Panc1 (cell line): ENCODE measurements at regions of chr12 and their contacts with region 1.

Region 1: GRCh38 chr12:106841510-106842302 is 67.2 kb downstream of the RIC8B start:
- DNase-seq: no peak
- ATAC-seq: peak; percentile 74
- H3K4me3 ChIP-seq: no peak overlapping the region
- H3K27ac ChIP-seq: no peak overlapping the region
- H3K4me1 ChIP-seq: no peaks in the 10 kb centered on the region
- H3K27me3 ChIP-seq: no peaks in the 10 kb centered on the region
- CTCF ChIP-seq: peak; percentile 65; the same call in 1 of the 2 replicates

Region 2: DNA sequence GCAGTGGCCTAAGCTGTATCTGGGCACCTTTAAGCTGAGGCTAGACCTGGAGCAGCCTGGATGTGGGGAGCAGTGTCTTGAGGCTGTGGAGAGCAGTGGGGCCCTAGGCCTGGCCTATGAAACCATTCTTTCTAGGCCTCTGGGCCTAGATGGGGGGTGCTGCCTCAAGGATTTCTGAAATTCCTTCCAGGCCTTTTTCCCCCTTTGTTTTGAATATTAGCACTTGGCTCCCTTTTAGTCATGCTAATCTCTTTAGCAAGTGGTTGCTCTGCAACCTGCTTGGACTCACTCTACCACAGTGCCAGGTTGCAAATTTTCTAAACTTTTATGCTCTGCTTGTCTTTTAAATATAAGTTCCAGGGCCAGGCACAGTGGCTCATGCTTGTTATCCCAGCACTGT is 300.5 kb before region 1 on chr12:
- CTCF ChIA-PET with region 1: interaction called, 12 read pairs
- POLR2A ChIA-PET with region 1: no interaction called
- in situ Hi-C with region 1: no loop called
- intact Hi-C with region 1: no loop called
- DNase-seq: no peak
- ATAC-seq: no peak
- H3K4me3 ChIP-seq: no peak overlapping the region
- H3K27ac ChIP-seq: no peak overlapping the region
- H3K4me1 ChIP-seq: no peaks in the 10 kb centered on the region
- H3K27me3 ChIP-seq: peaks cover 3% of the 10 kb centered on the region; the same call in 1 of the 2 replicates
- CTCF ChIP-seq: no peak

Region 3: GRCh38 chr12:106774005-106774807 is 67.5 kb before region 1 on chr12 and contains the start of gene RIC8B:
- CTCF ChIA-PET with region 1: no interaction called
- POLR2A ChIA-PET with region 1: no interaction called
- in situ Hi-C with region 1: no loop called
- intact Hi-C with region 1: no loop called
- DNase-seq: peak; percentile 95
- ATAC-seq: peak; percentile 97
- H3K4me3 ChIP-seq: peak within 1 kb of the TSS; percentile 84 to 98
- H3K27ac ChIP-seq: peak within 1 kb of the TSS; percentile 99
- H3K4me1 ChIP-seq: peaks cover 16% of the 10 kb centered on the region
- H3K27me3 ChIP-seq: no peaks in the 10 kb centered on the region
- CTCF ChIP-seq: no peak
- total RNA-seq, gene RIC8B: 16.1 TPM

Region 4: DNA sequence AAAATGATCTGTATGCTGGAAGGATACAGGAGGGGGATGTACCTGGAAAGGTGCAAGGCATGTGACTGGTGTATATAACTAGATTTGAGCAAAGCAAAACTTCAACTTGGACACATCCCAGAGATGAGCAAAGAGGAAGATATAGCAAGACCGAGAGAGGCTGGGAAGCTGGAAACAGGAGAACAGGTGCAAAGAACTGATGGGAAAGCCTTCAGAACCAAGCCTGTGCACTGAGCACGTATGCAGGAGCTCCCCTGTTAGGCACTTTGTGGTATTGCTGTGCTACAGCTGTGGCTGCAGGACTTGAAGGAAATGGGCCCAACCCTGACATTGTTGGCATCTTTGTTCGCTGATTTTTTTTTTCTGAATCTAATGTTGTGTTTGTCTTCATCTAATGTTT is 723.2 kb after region 1 on chr12:
- CTCF ChIA-PET with region 1: no interaction called
- POLR2A ChIA-PET with region 1: no interaction called
- in situ Hi-C with region 1: no loop called
- intact Hi-C with region 1: no loop called
- DNase-seq: no peak
- ATAC-seq: no peak
- H3K4me3 ChIP-seq: no peak overlapping the region
- H3K27ac ChIP-seq: no peak overlapping the region
- H3K4me1 ChIP-seq: no peaks in the 10 kb centered on the region
- H3K27me3 ChIP-seq: peaks cover 9% of the 10 kb centered on the region
- CTCF ChIP-seq: peak; percentile 18; the same call in 1 of the 2 replicates